ENCODE measurements at regions of chr6 and their contacts with region 1.

Region 1: DNA sequence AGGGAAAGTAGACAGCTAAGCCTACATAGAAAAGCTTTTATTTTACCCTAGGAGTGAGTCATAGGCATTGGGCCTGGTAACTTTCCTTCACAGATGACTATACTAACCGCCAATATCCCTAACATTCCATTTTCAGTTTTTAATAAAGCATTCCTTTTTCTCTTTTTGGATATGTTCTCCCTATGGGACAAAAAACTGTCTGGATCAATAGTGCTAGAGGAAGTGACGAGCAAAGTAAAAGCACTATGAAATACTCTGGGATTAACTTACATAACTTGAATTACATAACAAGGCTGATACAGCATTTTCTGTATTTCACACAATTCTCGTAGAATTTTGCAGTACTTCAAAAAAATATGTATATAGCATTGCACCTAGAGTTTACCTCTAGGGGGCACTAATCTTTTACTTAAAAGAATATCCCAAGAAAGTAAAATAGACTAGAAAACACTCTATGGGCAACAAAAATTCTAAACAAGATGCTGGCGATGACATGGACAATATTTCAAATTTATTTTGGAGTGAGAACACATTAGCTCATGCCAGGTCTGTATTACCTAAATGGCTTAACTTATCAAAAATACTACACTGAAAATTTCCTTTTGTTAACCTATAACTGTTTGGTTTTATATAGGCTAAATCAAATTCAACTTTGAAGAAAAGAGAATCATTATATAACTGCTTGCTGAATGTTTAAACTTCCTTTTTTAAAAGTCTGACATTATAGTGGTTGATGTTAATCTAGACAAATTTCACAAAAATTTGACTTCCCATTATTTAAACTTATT is 66.3 kb upstream of the DST start:
- H3K4me3 ChIP-seq: no peak overlapping the region
- H3K27ac ChIP-seq: no peak overlapping the region
- H3K4me1 ChIP-seq: peaks cover 9% of the 10 kb centered on the region; the same call in 1 of the 2 replicates
- CTCF ChIP-seq: no peak

Region 2: GRCh38 chr6:56499095-56499494 is 209.9 kb before region 1 on chr6:
- CTCF ChIA-PET with region 1: no interaction called
- POLR2A ChIA-PET with region 1: no interaction called
- H3K4me3 ChIP-seq: no peak overlapping the region
- H3K27ac ChIP-seq: no peak overlapping the region
- H3K4me1 ChIP-seq: no peaks in the 10 kb centered on the region
- CTCF ChIP-seq: no peak

Region 3: DNA sequence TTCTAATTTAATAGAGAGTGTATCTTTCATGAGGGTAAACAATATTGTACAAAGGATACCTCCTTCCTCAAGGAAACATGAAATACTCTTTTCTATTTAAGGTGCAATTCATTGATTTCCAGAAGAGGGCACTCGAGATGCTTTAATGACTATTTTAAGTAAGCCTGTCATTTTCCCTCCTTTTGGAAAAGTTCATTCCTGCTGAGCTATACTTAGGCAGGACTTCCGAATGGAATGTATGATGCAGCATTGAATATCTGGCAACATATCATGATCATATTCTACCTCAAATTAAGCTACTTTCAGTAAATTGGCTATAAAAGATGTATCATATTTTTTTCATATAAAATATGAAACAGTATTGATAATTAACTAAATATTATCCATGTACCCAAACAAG is 71.4 kb before region 1 on chr6:
- CTCF ChIA-PET with region 1: interaction called, 14 read pairs
- POLR2A ChIA-PET with region 1: no interaction called
- H3K4me3 ChIP-seq: no peak overlapping the region
- H3K27ac ChIP-seq: no peak overlapping the region
- H3K4me1 ChIP-seq: no peaks in the 10 kb centered on the region
- CTCF ChIP-seq: 0 out of 2 replicates have a peak, but pooled peaks have one; percentile 13

Region 4: GRCh38 chr6:56724455-56724854 is 15.5 kb after region 1 on chr6:
- CTCF ChIA-PET with region 1: interaction called, 29 read pairs
- POLR2A ChIA-PET with region 1: no interaction called
- H3K4me3 ChIP-seq: no peak overlapping the region
- H3K27ac ChIP-seq: no peak overlapping the region
- H3K4me1 ChIP-seq: peaks cover 36% of the 10 kb centered on the region
- CTCF ChIP-seq: no peak

Region 5: GRCh38 chr6:56757588-56757984 is 48.6 kb after region 1 on chr6:
- CTCF ChIA-PET with region 1: interaction called, 120 read pairs
- POLR2A ChIA-PET with region 1: no interaction called
- H3K4me3 ChIP-seq: no peak overlapping the region
- H3K27ac ChIP-seq: no peak overlapping the region
- H3K4me1 ChIP-seq: peaks cover 11% of the 10 kb centered on the region; the same call in 1 of the 2 replicates
- CTCF ChIP-seq: peak; percentile 44; the same call in 1 of the 2 replicates

Region 6: GRCh38 chr6:56843573-56844349 is 134.8 kb after region 1 on chr6:
- CTCF ChIA-PET with region 1: interaction called, 35 read pairs
- POLR2A ChIA-PET with region 1: interaction called, 5 read pairs
- H3K4me3 ChIP-seq: peak overlapping the region; percentile 74
- H3K27ac ChIP-seq: peak overlapping the region; percentile 94
- H3K4me1 ChIP-seq: peaks cover 7% of the 10 kb centered on the region
- CTCF ChIP-seq: peak; percentile 95

Measured in HEK293 (cell line).